Endothelial cell of umbilical vein (primary cell): ENCODE measurements at regions of chr12 and their contacts with region 1.

Region 1: GRCh38 chr12:120327593-120327992 is at the start of gene PLA2G1B:
- DNase-seq: no peak
- H3K4me3 ChIP-seq: no peak within 1 kb of the TSS
- H3K27ac ChIP-seq: no peak within 1 kb of the TSS
- H3K4me1 ChIP-seq: no peaks in the 10 kb centered on the region
- H3K27me3 ChIP-seq: no peaks in the 10 kb centered on the region
- CTCF ChIP-seq: no peak
- POLR2A ChIP-seq: no peak
- total RNA-seq, gene PLA2G1B: not detected in 2 replicates

Region 2: DNA sequence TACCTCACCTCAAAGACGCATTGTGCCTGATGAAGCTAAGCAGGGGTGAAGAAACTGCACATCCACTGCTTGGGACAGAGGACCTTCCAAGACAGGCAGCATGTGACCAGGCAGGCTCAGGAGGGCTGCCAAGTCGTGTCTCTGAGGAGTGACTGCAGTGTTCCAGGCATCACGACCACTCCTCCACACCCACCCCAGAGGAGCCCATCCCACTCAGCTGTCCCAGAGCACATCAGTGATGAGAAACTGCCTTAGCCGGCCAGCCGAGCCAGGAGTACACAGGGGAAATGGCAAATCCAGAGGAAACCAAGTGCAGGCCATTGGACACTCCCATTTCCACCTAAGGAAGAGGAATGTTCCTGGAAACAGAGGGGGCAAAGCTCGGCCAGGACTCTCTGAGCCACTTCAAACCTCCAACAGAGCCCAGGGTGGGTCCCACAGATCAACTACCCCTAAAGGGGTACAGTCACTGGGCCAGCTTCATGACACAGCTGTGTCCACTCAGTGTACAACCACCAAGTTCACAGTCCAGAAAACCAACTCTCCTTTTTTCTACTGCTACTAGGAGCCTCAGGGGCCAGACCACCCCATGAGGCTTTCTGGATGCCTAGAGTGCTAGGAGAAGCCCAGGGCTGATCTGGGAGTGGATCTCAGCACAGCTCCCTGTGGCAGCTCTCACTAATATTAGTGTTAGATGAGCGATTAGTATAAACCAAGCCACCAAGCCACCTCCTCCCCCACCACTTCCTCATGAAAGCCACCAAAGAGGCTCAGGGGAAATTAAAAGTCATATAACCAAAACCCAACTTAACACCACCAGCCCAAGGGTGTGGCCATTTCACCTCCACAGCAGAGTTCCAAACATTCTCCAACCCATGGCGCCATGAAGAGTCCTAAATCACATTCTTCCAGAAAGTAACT is 77.5 kb before region 1 on chr12:
- CTCF ChIA-PET with region 1: no interaction called
- POLR2A ChIA-PET with region 1: no interaction called
- dilution Hi-C with region 1: no loop called
- intact Hi-C with region 1: no loop called
- DNase-seq: peak; percentile 53
- H3K4me3 ChIP-seq: peak overlapping the region in 1 of 3 experiments; percentile 5
- H3K27ac ChIP-seq: peak overlapping the region; percentile 56
- H3K4me1 ChIP-seq: peaks cover 66% of the 10 kb centered on the region
- H3K27me3 ChIP-seq: no peaks in the 10 kb centered on the region
- CTCF ChIP-seq: no peak
- POLR2A ChIP-seq: peak; percentile 43

Region 3: GRCh38 chr12:120428597-120429229 is 101.1 kb after region 1 on chr12:
- CTCF ChIA-PET with region 1: interaction called, 13 read pairs
- POLR2A ChIA-PET with region 1: no interaction called
- dilution Hi-C with region 1: no loop called
- intact Hi-C with region 1: loop called (anchors 1 kb)
- DNase-seq: no peak
- H3K4me3 ChIP-seq: no peak overlapping the region
- H3K27ac ChIP-seq: no peak overlapping the region
- H3K4me1 ChIP-seq: no peaks in the 10 kb centered on the region
- H3K27me3 ChIP-seq: peaks cover 0 to 3% of the 10 kb centered on the region in 2 experiments
- CTCF ChIP-seq: no peak
- POLR2A ChIP-seq: no peak

Region 4: DNA sequence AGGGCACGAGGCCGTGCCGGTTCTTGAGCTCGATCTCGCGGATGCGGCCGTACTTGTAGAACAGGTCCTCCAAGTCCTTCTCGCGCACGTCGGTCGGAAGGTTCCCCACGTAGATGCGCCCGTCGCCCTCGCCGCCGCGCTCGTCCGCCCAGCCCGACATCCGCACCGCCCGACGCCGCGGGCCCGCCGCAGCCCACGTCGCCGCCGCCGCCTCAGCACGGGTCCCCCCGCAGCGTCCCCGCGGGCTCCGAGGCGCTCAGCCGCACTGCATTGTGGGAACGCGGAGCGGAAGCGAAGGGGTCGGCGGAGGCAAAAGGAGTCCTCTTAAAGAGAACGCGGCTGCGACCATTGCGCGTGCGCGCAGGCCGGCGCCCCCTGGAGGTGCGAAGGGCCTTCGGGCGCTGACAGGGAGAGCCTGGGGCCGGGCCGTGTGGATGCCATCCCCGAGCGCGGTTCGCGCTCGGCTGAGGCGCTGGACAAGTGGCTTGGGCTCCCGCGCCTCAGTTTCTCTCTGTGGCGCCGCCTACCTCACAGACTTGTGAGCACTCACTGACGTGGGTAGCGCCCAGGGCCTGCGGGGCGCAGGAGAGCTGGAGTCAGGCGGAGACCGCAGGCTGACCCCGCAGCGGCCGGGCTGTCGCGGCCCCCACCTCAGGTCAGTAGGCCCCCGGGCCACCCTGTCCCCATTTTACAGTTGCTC is 142.0 kb after region 1 on chr12 and contains the start of gene SRSF9:
- CTCF ChIA-PET with region 1: no interaction called
- POLR2A ChIA-PET with region 1: no interaction called
- dilution Hi-C with region 1: no loop called
- intact Hi-C with region 1: no loop called
- DNase-seq: peak; percentile 96
- H3K4me3 ChIP-seq: peak within 1 kb of the TSS; percentile 54 to 90 (median 78)
- H3K27ac ChIP-seq: peak within 1 kb of the TSS; percentile 68
- H3K4me1 ChIP-seq: peaks cover 5% of the 10 kb centered on the region
- H3K27me3 ChIP-seq: no peaks in the 10 kb centered on the region
- CTCF ChIP-seq: peak; percentile 96 to 99
- POLR2A ChIP-seq: peak; percentile 87
- total RNA-seq, gene SRSF9: 226 and 238 TPM in 2 replicates